Activated T-helper 1 cell treated with anti-CD3 and anti-CD28 coated beads, Interleukin-12 subunit alpha, Interleukin-12 subunit beta, Interleukin-2, Interleukin-4 antibody, amounts not matched to agents 30 ng/mL and 10 ng/mL and 1 ng/mL, durations not matched to agents 14 hours and 24 hours and 36 hours (primary cell): ENCODE measurements at regions of chr1 and their contacts with region 1.

Region 1: GRCh38 chr1:17059739-17060460 is 6.1 kb upstream of the SDHB start:
- DNase-seq: peak; percentile 15
- H3K4me3 Mint-ChIP-seq: no peak overlapping the region
- H3K27ac Mint-ChIP-seq: no peak overlapping the region
- H3K4me1 Mint-ChIP-seq: no peaks in the 10 kb centered on the region
- H3K27me3 Mint-ChIP-seq: peaks cover 13% of the 10 kb centered on the region

Region 2: GRCh38 chr1:16938351-16939321 is 121.3 kb before region 1 on chr1:
- intact Hi-C with region 1: no loop called
- DNase-seq: no peak
- H3K4me3 Mint-ChIP-seq: no peak overlapping the region
- H3K27ac Mint-ChIP-seq: no peak overlapping the region
- H3K4me1 Mint-ChIP-seq: no peaks in the 10 kb centered on the region
- H3K27me3 Mint-ChIP-seq: no peaks in the 10 kb centered on the region

Region 3: GRCh38 chr1:17075470-17076255 is 15.8 kb after region 1 on chr1:
- intact Hi-C with region 1: loop called (anchors 1 kb)
- DNase-seq: no peak
- H3K4me3 Mint-ChIP-seq: no peak overlapping the region
- H3K27ac Mint-ChIP-seq: no peak overlapping the region
- H3K4me1 Mint-ChIP-seq: no peaks in the 10 kb centered on the region
- H3K27me3 Mint-ChIP-seq: peaks cover 5% of the 10 kb centered on the region

Region 4: DNA sequence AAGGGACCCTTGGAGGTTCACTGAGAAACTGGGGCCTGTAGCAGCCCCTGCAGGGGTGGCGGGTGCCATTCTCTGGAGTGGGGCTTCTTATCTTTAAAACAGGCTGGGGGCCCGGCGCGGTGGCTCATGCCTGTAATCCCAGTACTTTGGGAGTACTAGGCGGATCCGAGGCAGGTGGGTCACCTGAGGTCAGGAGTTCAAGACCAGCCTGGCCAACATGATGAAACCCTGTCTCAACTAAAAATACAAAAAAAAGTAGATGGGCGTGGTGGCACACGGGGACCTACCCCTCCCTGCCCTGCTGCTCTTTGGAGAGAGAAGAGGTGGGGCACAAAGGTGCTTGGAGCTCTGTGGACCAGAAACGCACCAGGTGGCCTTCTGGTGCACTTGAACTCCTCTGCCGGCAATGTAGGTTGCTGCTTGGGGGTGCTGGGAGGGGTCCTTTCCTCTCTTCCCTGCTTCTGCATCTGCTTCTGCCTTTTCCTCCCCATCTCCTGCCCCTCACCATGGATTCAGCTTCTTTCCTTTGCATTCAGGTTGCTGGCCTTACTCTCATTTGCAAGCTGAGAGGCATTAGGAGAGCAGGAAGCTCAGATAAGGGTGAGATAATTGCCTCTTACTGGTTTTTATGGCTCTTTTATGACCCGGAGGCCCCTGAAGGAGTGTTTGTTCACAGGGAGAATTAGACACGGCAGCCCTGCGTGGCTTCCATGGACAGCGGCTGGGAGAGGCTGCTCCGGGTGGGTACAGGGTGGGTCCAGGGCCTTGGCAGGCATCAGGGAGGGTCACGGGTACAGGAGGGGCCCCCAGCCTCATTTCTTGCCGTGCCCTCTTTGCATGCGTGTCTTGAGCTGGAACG is 537.0 kb after region 1 on chr1:
- intact Hi-C with region 1: no loop called
- DNase-seq: no peak
- H3K4me3 Mint-ChIP-seq: no peak overlapping the region
- H3K27ac Mint-ChIP-seq: no peak overlapping the region
- H3K4me1 Mint-ChIP-seq: no peaks in the 10 kb centered on the region
- H3K27me3 Mint-ChIP-seq: no peaks in the 10 kb centered on the region